HEK293T (cell line): ENCODE measurements at regions of chr19 and their contacts with region 1.

Region 1: DNA sequence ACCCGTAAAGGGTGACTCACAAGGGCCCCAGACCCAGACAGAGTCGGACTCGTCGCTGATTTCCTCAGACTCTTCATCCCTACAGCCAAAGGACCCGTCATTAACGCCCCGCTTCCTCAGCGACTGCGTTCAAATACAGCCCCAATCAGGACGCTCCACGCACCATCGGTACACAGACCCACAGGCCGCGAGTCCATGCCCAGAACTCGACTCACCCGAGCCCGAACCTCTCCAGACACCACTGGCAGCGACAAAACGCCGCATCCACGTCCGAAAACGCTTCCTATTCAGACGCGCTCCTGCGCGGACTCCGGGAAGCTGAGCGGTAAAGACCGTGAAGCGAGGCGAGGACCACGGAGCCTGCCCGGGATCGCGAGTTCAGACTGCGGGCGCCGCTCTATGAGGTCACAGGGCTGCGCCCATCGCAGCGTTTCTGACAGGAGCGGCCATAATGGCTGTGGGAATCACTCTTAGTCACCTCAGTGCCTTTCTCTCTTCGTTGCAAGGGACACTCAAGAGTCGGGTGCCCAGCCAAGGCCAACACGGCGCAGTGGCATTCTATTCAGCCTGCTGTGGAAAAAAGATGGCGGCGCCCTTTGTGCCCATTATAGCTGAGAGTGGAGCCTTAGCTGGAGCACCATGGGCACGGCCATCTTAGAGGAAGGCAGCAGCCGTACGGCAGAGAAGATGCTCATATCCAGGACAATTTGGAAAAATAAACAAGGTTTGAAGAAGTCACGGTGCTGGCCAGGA is at the start of gene ZNF614:
- DNase-seq: peak; percentile 82

Region 2: GRCh38 chr19:51944798-51945552 is 83.2 kb before region 1 on chr19:
- CTCF ChIA-PET with region 1: no interaction called
- POLR2A ChIA-PET with region 1: no interaction called
- DNase-seq: no peak

Region 3: DNA sequence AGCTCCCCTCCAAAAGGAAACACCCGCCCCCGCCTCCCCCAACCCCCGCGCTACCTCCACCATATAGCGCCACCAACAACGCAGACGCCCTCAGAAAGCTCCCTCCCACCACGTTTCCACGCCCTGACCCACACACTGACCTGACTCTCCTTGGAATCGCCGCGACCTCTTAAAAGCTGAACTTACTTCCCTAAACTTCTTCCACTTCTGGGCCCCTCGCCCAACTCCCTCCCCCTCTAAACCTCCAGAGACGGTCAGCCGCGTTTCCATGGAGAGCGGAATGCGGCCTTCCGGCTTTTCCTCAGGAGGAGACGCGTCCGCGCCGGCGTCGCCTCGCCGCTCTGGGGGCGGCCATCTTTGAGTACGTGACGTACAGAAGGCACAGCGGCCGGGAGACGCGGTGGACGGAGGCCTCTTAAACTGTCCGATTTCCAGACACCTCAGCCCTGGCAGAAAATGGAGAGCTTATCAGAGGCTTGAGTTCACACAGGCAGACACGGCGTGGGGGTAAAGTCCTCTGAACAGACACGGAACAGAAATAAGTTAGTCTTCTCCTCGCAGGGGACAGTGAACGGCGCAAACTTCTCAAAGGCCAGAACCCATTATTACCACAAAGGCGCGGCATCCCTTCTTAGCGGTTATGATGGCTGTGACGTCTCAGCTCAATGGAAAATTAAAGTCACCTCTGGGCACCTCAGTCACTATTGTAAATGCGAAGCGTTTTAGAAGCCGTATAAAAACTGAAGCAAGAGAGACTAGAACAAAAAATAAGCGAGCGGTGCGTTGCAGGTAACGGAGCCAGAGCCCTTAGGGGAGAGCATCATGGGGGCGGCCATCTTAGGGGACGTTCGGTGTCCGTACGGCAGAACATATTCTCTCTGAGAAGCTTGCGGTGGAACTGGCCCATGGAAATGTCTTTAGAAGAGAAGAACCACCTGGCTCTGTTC is 20.6 kb after region 1 on chr19 and contains the start of gene ZNF432:
- CTCF ChIA-PET with region 1: no interaction called
- POLR2A ChIA-PET with region 1: interaction called, 10 read pairs
- DNase-seq: peak; percentile 87